Posterior vena cava (tissue), 2 donors: ENCODE measurements at regions of chr11 and their contacts with region 1.

Region 1: GRCh38 chr11:10792398-10792975 is 16.2 kb downstream of the EIF4G2 start:
- DNase-seq: peak; percentile 97

Region 2: DNA sequence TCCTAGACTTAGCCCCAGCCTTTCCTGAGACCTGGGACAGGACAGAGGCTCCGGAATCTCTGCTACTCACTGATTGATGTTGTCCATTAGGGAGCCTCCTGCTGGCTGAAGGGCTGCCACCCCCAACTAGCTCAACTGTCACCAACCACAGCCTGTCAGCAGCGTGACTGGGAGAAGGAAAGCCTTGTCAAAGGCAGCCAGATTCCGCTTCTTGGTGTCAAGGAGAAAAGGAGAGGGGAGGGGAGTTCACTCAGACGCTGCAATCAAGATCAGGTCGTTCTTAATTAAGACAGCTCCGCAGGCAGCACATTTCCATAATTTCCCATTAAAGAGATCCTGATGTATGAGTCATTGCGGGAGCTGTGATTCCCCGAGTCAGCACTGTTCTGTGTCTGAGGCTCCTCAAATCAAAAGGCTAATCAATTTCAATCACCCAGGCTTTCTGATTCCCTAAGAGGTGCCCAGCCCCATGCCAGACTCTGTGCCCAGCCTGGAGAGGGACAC is 218.2 kb after region 1 on chr11:
- intact Hi-C with region 1: loop called (anchors 5 to 10 kb)
- DNase-seq: no peak

Region 3: DNA sequence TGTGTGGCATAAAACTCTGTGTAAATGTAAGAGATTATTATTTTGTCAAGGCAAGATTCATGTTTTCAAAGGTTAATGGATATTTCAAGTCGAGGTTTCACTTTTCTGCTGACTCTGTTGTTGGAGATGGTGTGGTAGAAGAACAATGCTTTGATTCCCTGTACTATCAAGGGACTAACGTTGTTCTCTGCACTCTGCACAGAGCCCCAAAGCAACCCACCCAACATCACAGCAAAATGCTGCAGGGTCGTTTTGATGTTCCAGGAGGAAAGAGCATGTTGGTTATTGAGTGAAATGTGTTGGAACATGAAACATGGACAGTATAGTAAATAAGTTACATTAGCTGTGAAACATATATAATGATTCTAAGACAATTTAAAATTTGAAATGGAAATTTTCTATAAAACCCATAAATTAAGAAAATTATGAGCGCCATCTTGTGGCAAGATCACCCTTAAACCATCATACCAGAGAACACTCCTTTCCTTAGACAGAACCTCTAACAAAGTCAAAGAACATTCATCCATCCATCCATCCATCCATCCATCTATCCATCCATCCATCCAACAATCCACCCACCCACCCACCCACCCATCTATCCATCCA is 229.7 kb after region 1 on chr11:
- intact Hi-C with region 1: loop called (anchors 5 to 10 kb)
- DNase-seq: no peak